ENCODE measurements at regions of chr4 and their contacts with region 1.

Region 1: GRCh38 chr4:2418650-2419571 is at the start of gene CFAP99:
- DNase-seq: peak; percentile 87 to 99
- H3K4me3 ChIP-seq: peak within 1 kb of the TSS; percentile 76 to 86
- H3K27ac ChIP-seq: peak within 1 kb of the TSS; percentile 19 to 29
- H3K4me1 ChIP-seq: peaks cover 6 to 9% of the 10 kb centered on the region in 2 donors
- H3K27me3 ChIP-seq: no peaks in the 10 kb centered on the region
- CTCF ChIP-seq: no peak
- total RNA-seq, gene CFAP99: not detected

Region 2: GRCh38 chr4:1721004-1721665 is 697.8 kb before region 1 on chr4 and contains the starts of genes TACC3 and TMEM129:
- intact Hi-C with region 1: loop called (anchors 10 kb)
- DNase-seq: peak; percentile 84 to 95
- H3K4me3 ChIP-seq: peak within 1 kb of the TSS; percentile 81 to 87
- H3K27ac ChIP-seq: peak within 1 kb of the TSS; percentile 87 to 90
- H3K4me1 ChIP-seq: peaks cover 12 to 18% of the 10 kb centered on the region in 2 donors
- H3K27me3 ChIP-seq: no peaks in the 10 kb centered on the region
- CTCF ChIP-seq: no peak
- total RNA-seq, gene TACC3: 2.7 TPM
- total RNA-seq, gene TMEM129: 192 TPM

Region 3: GRCh38 chr4:2241410-2242353 is 177.2 kb before region 1 on chr4 and contains the starts of genes HAUS3 and POLN:
- intact Hi-C with region 1: loop called (anchors 1 kb)
- DNase-seq: peak; percentile 90 to 99
- H3K4me3 ChIP-seq: peak within 1 kb of the TSS; percentile 65 to 97
- H3K27ac ChIP-seq: peak within 1 kb of the TSS; percentile 60 to 69
- H3K4me1 ChIP-seq: peaks cover 6 to 37% of the 10 kb centered on the region in 2 donors
- H3K27me3 ChIP-seq: no peaks in the 10 kb centered on the region
- CTCF ChIP-seq: no peak
- total RNA-seq, gene HAUS3: 9.0 TPM
- total RNA-seq, gene POLN: 0.21 TPM

Region 4: DNA sequence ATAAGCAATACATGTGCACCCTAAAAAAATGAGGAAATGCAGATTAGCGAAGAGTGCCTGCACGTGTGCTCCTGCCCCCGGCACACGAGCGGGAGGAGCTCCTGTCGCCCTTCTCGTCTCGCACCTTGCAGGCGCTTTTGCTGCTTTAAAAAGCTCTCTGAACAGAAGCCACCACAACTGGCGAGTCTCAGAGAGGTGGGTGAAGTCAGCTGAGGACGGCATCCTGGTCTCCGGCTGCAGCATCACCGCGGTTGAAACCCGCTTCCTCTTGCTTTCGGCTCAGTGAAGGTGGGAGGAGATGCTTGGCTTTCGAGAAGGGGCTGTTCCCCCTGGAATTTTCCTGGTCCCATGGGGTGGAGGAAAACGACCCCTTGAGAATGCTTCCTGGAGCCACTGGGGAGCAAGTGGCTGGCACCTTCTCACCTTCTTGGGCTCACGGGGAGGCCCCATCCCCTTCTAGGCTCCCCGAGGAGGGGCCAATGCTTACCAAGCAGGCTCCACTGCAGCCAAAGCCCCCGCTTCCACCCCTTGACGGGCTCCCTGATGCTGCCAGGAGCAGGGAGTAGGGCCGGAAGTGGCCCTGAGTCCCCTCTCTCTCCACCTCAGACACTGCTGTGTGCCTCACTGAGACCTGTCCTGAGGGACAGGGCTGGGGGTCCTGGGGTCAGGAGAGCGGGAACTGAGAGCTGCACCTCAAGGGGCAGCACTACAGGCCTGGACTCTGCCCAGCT is 127.8 kb before region 1 on chr4:
- intact Hi-C with region 1: no loop called
- DNase-seq: peak in 1 of 2 donors; percentile 64
- H3K4me3 ChIP-seq: no peak overlapping the region
- H3K27ac ChIP-seq: no peak overlapping the region
- H3K4me1 ChIP-seq: no peaks in the 10 kb centered on the region
- H3K27me3 ChIP-seq: no peaks in the 10 kb centered on the region
- CTCF ChIP-seq: no peak

Region 5: GRCh38 chr4:2441393-2442174 is 22.7 kb after region 1 on chr4:
- intact Hi-C with region 1: no loop called
- DNase-seq: peak in 1 of 2 donors; percentile 69
- H3K4me3 ChIP-seq: no peak overlapping the region
- H3K27ac ChIP-seq: no peak overlapping the region
- H3K4me1 ChIP-seq: no peaks in the 10 kb centered on the region
- H3K27me3 ChIP-seq: no peaks in the 10 kb centered on the region
- CTCF ChIP-seq: peak; percentile 29 to 54 (median 46)

Region 6: DNA sequence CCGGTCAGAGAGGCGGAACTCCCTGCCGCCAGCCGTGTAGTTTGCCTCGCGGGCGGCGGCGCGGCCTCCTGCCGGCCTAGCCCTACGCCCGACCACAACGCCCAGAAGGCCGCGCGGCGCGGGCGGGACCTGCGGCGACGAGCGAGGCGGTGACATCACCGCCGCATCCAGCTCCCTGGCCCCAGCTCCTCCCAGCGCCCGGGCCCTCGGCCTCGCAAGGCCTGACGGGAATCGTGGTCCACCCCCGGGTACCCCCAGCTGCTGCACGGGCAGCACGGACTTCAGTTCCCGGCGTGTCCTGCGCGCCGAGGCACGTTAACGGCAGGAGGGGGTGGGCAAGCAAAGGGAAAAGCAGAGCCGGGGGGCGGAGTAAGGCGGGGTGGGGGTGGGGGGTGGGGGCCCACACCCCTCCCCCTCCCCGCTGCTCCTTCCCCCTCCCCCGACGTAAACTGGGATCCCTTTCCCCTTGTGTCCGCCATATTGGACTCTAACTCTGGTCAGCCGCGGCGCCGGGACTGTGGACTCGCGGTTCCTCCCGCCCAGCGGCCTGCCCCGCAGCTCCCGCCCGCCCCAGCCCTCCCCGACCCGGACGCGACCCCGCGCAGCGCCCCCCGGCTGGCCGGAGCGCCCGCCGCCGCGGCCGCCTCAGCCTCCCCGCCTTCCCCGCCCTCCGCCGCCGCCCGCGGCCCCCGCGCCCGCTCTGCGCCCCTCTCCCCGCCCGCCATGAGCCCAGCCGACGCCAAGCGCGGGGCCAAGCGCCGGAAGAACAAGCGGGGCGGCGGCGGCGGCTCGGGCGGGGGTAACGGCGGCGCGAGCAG is 117.5 kb after region 1 on chr4 and contains the start of gene FAM193A:
- intact Hi-C with region 1: loop called (anchors 1 kb)
- DNase-seq: peak; percentile 98 to 100
- H3K4me3 ChIP-seq: peak within 1 kb of the TSS; percentile 97 to 100
- H3K27ac ChIP-seq: peak within 1 kb of the TSS; percentile 89 to 97
- H3K4me1 ChIP-seq: peaks cover 15 to 16% of the 10 kb centered on the region in 2 donors
- H3K27me3 ChIP-seq: no peaks in the 10 kb centered on the region
- CTCF ChIP-seq: no peak
- total RNA-seq, gene FAM193A: 30.9 TPM

Region 7: DNA sequence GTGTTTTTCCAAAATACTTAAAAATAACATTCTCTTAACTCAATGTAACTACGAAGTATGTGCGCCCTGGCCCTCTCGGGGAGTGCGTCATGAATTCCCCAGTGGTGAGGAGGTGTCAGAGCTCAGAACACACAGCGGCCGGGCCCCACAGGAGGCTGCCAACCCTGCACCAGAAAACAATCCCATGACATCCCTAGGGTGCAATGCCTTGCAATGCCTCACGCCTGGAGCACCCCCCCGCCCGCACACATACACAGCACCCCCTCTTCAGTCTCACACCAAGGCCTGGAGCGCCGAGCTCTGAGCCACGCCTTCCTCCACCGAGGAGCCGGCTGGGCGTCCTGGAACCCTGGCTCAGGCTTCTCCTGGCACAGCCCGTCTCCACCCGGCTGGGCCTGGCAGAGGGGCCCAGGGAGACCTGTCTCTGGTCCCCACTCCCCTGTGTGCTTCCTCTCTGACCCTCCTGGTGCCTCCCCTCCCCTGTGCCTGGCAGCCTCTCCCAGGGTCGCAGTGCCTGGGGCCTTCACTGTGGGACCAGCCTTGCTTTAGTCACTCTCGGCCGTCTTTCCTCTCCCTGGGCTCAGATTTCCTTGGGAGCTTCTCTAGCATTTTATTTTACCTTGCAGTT is 1239.1 kb after region 1 on chr4:
- intact Hi-C with region 1: loop called (anchors 5 kb)
- DNase-seq: peak; percentile 75 to 96
- H3K4me3 ChIP-seq: peak overlapping the region in 1 of 2 donors; percentile 44
- H3K27ac ChIP-seq: peak overlapping the region; percentile 92 to 97
- H3K4me1 ChIP-seq: peaks cover 6 to 22% of the 10 kb centered on the region in 2 donors
- H3K27me3 ChIP-seq: no peaks in the 10 kb centered on the region
- CTCF ChIP-seq: no peak